ENCODE measurements at regions of chr22 and their contacts with region 1.

Region 1: GRCh38 chr22:40679964-40680818 is 907 bp downstream of the MCHR1 start:
- DNase-seq: no peak
- ATAC-seq: no peak
- H3K4me3 Mint-ChIP-seq: no peak overlapping the region
- H3K27ac Mint-ChIP-seq: no peak overlapping the region
- H3K4me1 Mint-ChIP-seq: peaks cover 29% of the 10 kb centered on the region
- H3K27me3 Mint-ChIP-seq: peaks cover 21% of the 10 kb centered on the region

Region 2: GRCh38 chr22:40636380-40637182 is 43.6 kb before region 1 on chr22 and contains the start of gene MRTFA:
- CTCF ChIA-PET with region 1: no interaction called
- POLR2A ChIA-PET with region 1: no interaction called
- DNase-seq: peak; percentile 100
- ATAC-seq: peak; percentile 97
- H3K4me3 Mint-ChIP-seq: peak within 1 kb of the TSS; percentile 94
- H3K27ac Mint-ChIP-seq: peak within 1 kb of the TSS; percentile 96
- H3K4me1 Mint-ChIP-seq: peaks cover 25% of the 10 kb centered on the region
- H3K27me3 Mint-ChIP-seq: no peaks in the 10 kb centered on the region
- total RNA-seq, gene MRTFA: 65.0 to 65.1 TPM

Region 3: DNA sequence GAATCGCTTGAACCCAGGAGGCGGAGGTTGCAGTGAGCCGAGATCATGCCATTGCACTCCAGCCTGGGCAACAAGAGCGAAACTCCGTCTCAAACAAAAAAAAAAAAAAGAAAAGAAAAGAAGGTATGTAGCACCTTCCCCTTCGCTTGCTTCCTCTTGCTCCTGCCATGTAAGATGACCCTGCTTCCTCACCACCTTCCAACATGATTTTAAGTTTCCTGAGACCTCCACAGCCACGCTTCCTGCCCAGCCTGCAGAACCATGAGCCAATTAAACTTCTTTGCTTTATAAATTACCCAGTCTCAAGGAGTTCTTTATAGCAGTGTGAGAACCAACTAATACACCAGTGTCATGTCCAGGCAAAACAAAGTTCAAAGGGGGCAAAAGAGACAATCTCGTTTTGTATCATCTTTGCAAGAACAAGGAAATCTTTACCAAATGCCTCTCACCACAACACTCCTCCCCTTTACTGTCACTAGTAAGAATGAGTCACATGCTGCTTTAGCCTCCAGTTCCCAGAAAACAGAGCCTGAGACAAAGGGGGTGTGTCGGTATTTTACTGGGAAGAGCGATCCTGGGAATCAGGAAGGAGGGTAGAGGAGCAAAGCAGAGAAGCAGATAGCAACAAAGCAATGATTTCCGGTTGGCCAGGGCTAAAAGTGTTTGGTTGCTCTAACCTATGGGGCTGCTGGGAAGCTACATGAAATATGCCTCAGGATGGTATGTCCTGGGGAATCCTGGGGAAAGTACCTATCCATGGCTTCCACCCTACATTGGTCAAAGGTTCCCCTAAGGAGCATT is 11.4 kb before region 1 on chr22:
- CTCF ChIA-PET with region 1: interaction called, 21 read pairs
- POLR2A ChIA-PET with region 1: interaction called, 4 read pairs
- DNase-seq: peak; percentile 26
- ATAC-seq: peak; percentile 47
- H3K4me3 Mint-ChIP-seq: no peak overlapping the region
- H3K27ac Mint-ChIP-seq: peak overlapping the region; percentile 36
- H3K4me1 Mint-ChIP-seq: peaks cover 19% of the 10 kb centered on the region
- H3K27me3 Mint-ChIP-seq: no peaks in the 10 kb centered on the region

Region 4: DNA sequence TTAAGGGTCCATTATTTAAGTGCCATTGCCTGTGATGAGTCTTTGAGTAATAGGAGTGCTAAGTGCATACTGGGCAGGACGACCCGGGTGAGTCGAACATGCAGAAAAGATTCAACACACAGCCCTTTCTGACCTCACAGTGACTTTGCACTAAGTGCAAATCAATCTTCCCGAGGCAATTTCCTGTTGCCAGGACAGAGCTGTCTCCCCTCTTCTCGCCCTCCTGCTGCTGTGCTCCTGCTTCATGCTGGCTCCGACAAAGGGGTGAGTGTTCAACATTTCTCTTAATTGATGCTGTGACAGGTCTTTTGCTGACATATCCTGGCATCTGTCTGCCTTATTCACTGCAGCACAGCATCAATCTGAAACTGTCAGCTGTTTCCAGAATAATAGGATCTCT is 41.1 kb after region 1 on chr22:
- CTCF ChIA-PET with region 1: interaction called, 26 read pairs
- POLR2A ChIA-PET with region 1: no interaction called
- DNase-seq: no peak
- ATAC-seq: peak; percentile 30
- H3K4me3 Mint-ChIP-seq: no peak overlapping the region
- H3K27ac Mint-ChIP-seq: peak overlapping the region; percentile 69
- H3K4me1 Mint-ChIP-seq: peaks cover 23% of the 10 kb centered on the region
- H3K27me3 Mint-ChIP-seq: no peaks in the 10 kb centered on the region

Region 5: DNA sequence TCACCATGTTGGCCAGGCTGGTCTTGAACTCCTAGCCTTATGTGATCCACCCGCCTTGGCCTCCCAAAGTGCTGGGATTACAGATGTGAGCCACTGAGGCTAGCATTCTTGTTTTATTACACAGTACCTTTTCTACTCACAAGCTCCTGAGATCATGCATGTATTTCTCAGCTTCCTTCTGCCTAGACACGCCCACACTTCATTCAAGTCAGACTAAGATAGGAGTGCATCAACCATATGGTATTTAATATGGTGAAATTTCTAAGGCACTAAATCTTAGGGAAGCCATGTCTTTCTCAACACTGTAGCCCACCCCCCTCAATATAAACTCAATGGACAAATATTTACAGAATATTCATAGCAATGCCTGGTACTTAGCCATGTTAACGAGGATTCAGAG is 76.9 kb after region 1 on chr22:
- CTCF ChIA-PET with region 1: interaction called, 158 read pairs
- POLR2A ChIA-PET with region 1: interaction called, 10 read pairs
- DNase-seq: no peak
- ATAC-seq: no peak
- H3K4me3 Mint-ChIP-seq: no peak overlapping the region
- H3K27ac Mint-ChIP-seq: no peak overlapping the region
- H3K4me1 Mint-ChIP-seq: no peaks in the 10 kb centered on the region
- H3K27me3 Mint-ChIP-seq: no peaks in the 10 kb centered on the region

Region 6: DNA sequence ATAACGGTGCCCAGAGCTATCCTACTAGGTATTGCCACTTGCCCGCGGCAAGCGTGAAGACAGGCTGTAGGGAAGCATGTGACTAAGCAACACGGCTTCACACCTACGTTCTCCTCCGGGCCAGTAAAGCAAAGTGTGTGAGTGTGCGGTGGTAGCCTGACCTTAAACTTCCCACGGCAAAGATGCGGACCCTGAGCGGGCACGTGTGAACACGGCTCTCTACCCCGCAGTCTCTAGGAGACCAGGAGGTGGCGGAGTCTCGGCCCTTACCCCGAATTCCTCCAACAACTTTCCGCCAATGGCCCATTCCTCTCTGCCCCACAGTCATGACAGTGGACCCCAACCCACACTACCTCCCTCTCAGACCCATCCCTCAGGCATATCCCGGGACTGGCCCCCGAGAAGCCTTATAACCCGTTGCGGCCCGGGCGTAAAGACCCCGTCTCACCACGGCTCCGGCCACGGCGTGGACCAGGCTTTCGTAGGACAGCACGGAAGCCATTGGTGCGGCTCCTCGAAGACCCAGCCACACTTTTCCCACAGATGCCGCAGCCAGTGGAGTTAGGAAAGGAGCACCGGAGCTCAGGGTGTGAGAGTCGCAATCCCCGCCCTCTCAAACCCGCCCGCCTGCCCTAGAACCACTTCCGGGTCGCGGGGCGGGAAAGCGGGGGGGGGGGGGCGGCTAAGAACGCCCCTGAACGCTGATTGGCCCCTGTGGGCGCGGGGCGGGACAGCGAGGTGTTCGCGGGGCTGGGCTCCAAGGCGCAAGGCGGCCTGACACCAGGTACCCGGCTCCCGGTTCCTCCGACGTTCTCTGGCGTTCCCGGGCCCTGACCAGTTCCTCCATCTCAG is 138.8 kb after region 1 on chr22 and contains the start of gene SLC25A17:
- CTCF ChIA-PET with region 1: interaction called, 33 read pairs
- POLR2A ChIA-PET with region 1: no interaction called
- DNase-seq: peak; percentile 90
- ATAC-seq: peak; percentile 93
- H3K4me3 Mint-ChIP-seq: peak within 1 kb of the TSS; percentile 94
- H3K27ac Mint-ChIP-seq: peak within 1 kb of the TSS; percentile 92
- H3K4me1 Mint-ChIP-seq: peaks cover 34% of the 10 kb centered on the region
- H3K27me3 Mint-ChIP-seq: no peaks in the 10 kb centered on the region
- total RNA-seq, gene SLC25A17: 20.0 to 24.1 TPM

Region 7: DNA sequence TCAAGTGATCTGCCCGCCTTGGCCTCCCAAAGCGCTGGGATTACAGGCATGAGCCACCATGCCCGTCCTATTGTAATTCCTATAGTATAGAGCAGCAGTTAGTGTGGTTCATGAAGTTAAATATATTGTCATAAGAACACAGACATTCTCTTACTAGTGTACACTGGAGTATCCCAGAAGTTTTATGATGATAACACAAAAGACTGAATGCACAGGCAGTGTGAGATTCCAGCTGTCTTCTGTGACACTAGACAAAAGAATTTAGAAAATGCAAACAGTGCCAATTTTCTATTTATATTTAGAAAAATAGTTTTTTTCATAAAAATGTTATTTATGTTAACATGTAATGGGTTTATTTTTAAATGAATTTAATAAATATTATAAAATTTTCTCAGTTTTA is 231.6 kb after region 1 on chr22:
- CTCF ChIA-PET with region 1: interaction called, 11 read pairs
- POLR2A ChIA-PET with region 1: no interaction called
- DNase-seq: no peak
- ATAC-seq: no peak
- H3K4me3 Mint-ChIP-seq: no peak overlapping the region
- H3K27ac Mint-ChIP-seq: no peak overlapping the region
- H3K4me1 Mint-ChIP-seq: no peaks in the 10 kb centered on the region
- H3K27me3 Mint-ChIP-seq: no peaks in the 10 kb centered on the region